Mammary epithelial cell (primary cell): ENCODE measurements at regions of chr1 and their contacts with region 1.

Region 1: GRCh38 chr1:110963691-110964399 is at the start of gene LRIF1:
- DNase-seq: peak; percentile 99
- H3K4me3 ChIP-seq: peak within 1 kb of the TSS; percentile 56 to 89 (median 75)
- H3K27ac ChIP-seq: peak within 1 kb of the TSS; percentile 96
- H3K4me1 ChIP-seq: peaks cover 3% of the 10 kb centered on the region
- H3K27me3 ChIP-seq: no peaks in the 10 kb centered on the region
- CTCF ChIP-seq: peak; percentile 30 to 49
- total RNA-seq, gene LRIF1: 17.5 to 20.1 TPM

Region 2: GRCh38 chr1:110948038-110948810 is 15.6 kb before region 1 on chr1:
- CTCF ChIA-PET with region 1: interaction called, 8 read pairs
- dilution Hi-C with region 1: no loop called
- in situ Hi-C with region 1: no loop called
- intact Hi-C with region 1: loop called (anchors 2 kb)
- DNase-seq: peak; percentile 32
- H3K4me3 ChIP-seq: no peak overlapping the region
- H3K27ac ChIP-seq: no peak overlapping the region
- H3K4me1 ChIP-seq: no peaks in the 10 kb centered on the region
- H3K27me3 ChIP-seq: no peaks in the 10 kb centered on the region
- CTCF ChIP-seq: no peak